Heart right ventricle (tissue), 16 donors: ENCODE measurements at regions of chr18 and their contacts with region 1.

Region 1: DNA sequence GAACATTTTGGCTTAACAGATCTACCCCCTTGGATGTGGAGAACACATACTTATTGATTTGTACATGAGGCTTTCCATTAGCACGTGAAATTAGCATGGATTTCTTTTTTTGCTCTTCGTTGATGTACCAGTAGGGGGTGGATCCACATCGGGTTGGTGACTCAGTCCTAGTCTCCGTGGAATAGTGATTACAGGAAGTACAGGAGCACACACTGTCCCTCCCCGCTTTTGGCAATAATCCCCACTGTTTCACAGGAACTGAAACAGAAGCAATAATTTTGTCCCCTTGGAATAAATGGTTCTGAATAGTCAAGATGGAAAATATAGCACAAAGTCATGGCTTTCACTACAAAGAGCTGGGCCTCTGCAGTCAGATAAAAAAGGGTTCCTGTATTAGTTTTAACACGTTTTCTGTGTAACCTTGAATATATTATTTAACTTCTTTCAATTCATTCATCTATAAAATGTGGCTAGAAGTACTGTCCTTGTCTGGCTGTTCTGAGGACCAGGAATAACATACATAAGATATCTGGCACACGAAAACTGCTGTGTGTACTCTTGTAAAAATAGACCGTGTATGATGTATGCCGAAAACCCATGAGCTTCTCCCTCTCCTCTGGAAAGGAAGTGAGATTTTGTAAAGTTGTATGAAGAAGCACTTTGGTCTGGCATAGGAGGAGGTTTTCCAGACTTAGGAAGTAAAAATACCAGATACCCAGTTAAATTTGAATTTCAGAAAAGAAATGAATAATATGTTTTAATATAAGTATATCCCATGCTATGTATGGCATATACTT is 229.2 kb downstream of the GALR1 start:
- DNase-seq: peak in 1 of 2 donors; percentile 81
- ATAC-seq: peak in 7 of 8 donors; percentile 84 to 98 (median 91)
- H3K4me3 ChIP-seq: no peak overlapping the region
- H3K27ac ChIP-seq: peak overlapping the region in 7 of 10 donors; percentile 26 to 62 (median 54)
- H3K4me1 ChIP-seq: peaks cover 0 to 14% (median 0%) of the 10 kb centered on the region in 9 donors
- H3K27me3 ChIP-seq: peaks cover 0 to 8% (median 0%) of the 10 kb centered on the region in 7 donors
- CTCF ChIP-seq: peak in 6 of 9 donors; percentile 19 to 45 (median 25)

Region 2: GRCh38 chr18:77550625-77551024 is 71.8 kb after region 1 on chr18:
- intact Hi-C with region 1: loop called in 1 of 10 experiments (anchors 2 kb)
- DNase-seq: peak in 1 of 2 donors; percentile 30
- ATAC-seq: peak; percentile 50 to 86 (median 69)
- H3K4me3 ChIP-seq: no peak overlapping the region
- H3K27ac ChIP-seq: peak overlapping the region in 4 of 10 donors; percentile 4 to 47 (median 23)
- H3K4me1 ChIP-seq: peaks cover 0 to 18% (median 0%) of the 10 kb centered on the region in 9 donors
- H3K27me3 ChIP-seq: no peaks in the 10 kb centered on the region
- CTCF ChIP-seq: no peak